Activated CD8-positive, alpha-beta memory T cell treated with anti-CD3 and anti-CD28 coated beads, Interleukin-2, amount 10 ng/mL, durations not matched to agents 7 days and 5 days (primary cell): ENCODE measurements at regions of chr7 and their contacts with region 1.

Region 1: DNA sequence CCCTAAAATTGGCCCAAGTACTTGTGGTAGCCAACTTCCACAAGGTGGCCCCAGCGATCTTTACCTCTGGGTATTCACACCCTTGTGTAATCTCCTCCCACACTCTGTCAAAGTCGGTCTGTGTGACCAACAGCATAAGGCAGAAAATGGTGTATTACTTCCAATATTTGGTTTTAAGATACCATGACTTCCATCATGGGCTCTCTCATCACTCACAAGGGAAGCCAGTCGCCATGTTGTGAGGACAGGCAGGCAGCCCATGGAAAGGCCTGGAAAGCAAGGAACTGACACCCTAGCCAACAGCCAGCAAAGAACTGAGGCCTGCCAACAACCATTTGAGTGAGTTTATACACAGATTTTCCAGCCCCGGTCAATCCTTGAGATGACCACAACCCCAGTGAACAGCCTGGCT is 91.0 kb upstream of the KMT2E start:
- DNase-seq: peak; percentile 89
- ATAC-seq: peak; percentile 99
- H3K4me3 Mint-ChIP-seq: no peak overlapping the region
- H3K27ac Mint-ChIP-seq: peak overlapping the region; percentile 73
- H3K4me1 Mint-ChIP-seq: peaks cover 7% of the 10 kb centered on the region
- H3K27me3 Mint-ChIP-seq: peaks cover 3% of the 10 kb centered on the region

Region 2: GRCh38 chr7:104231054-104232046 is 691.7 kb before region 1 on chr7:
- CTCF ChIA-PET with region 1: interaction called, 18 read pairs
- DNase-seq: peak; percentile 64
- ATAC-seq: peak; percentile 76
- H3K4me3 Mint-ChIP-seq: no peak overlapping the region
- H3K27ac Mint-ChIP-seq: no peak overlapping the region
- H3K4me1 Mint-ChIP-seq: peaks cover 1% of the 10 kb centered on the region
- H3K27me3 Mint-ChIP-seq: peaks cover 30% of the 10 kb centered on the region

Region 3: DNA sequence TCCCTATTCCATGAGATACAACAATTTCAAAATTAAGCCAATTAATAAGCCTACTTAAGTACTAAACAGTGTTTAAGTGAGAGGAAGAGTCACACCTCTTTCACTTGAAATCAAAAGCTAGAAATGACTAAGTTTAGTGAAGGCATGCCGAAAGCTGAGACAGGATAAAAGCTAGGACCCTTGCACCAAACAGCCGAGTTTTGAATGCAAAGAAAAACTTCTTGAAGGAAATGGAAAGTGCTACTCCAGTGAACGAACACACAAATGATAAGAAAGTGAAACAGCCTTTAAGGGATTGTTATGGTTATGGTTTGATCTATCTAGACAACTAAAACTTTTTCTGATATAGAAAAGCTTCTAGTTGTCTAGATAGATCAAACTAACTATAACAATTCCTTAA is 44.4 kb before region 1 on chr7:
- CTCF ChIA-PET with region 1: interaction called, 103 read pairs
- DNase-seq: no peak
- ATAC-seq: peak; percentile 86
- H3K4me3 Mint-ChIP-seq: peak overlapping the region; percentile 29
- H3K27ac Mint-ChIP-seq: peak overlapping the region; percentile 54
- H3K4me1 Mint-ChIP-seq: peaks cover 18% of the 10 kb centered on the region
- H3K27me3 Mint-ChIP-seq: peaks cover 3% of the 10 kb centered on the region

Region 4: GRCh38 chr7:104895522-104896236 is 27.3 kb before region 1 on chr7:
- CTCF ChIA-PET with region 1: interaction called, 13 read pairs
- DNase-seq: no peak
- ATAC-seq: no peak
- H3K4me3 Mint-ChIP-seq: no peak overlapping the region
- H3K27ac Mint-ChIP-seq: no peak overlapping the region
- H3K4me1 Mint-ChIP-seq: peaks cover 12% of the 10 kb centered on the region
- H3K27me3 Mint-ChIP-seq: peaks cover 2% of the 10 kb centered on the region

Region 5: GRCh38 chr7:104983578-104984539 is 60.8 kb after region 1 on chr7:
- CTCF ChIA-PET with region 1: interaction called, 17 read pairs
- DNase-seq: peak; percentile 92
- ATAC-seq: peak; percentile 93
- H3K4me3 Mint-ChIP-seq: peak overlapping the region; percentile 99
- H3K27ac Mint-ChIP-seq: peak overlapping the region; percentile 100
- H3K4me1 Mint-ChIP-seq: peaks cover 71% of the 10 kb centered on the region
- H3K27me3 Mint-ChIP-seq: no peaks in the 10 kb centered on the region